ENCODE measurements at regions of chr10 and their contacts with region 1.

Region 1: GRCh38 chr10:102450194-102450938 is 977 bp downstream of the C10orf95 start:
- DNase-seq: peak in 1 of 2 experiments; percentile 84
- H3K4me3 ChIP-seq: peak overlapping the region; percentile 87 to 99 (median 98)
- H3K27ac ChIP-seq: peak overlapping the region; percentile 72
- H3K4me1 ChIP-seq: peaks cover 5 to 26% (median 18%) of the 10 kb centered on the region in 4 experiments
- H3K27me3 ChIP-seq: no peaks in the 10 kb centered on the region
- CTCF ChIP-seq: no peak
- EP300 ChIP-seq: no peak
- POLR2A ChIP-seq: no peak; a peak in 1 of 3 replicates
- RAD21 ChIP-seq: no peak; a peak in 1 of 4 replicates

Region 2: GRCh38 chr10:102399217-102400089 is 50.9 kb before region 1 on chr10:
- CTCF ChIA-PET with region 1: interaction called, 23 read pairs
- POLR2A ChIA-PET with region 1: interaction called, 5 read pairs
- DNase-seq: peak; percentile 70 to 96
- H3K4me3 ChIP-seq: peak overlapping the region; percentile 33 to 70 (median 60)
- H3K27ac ChIP-seq: no peak overlapping the region
- H3K4me1 ChIP-seq: peaks cover 0 to 22% (median 13%) of the 10 kb centered on the region in 4 experiments; a peak in 6 of 7 replicates
- H3K27me3 ChIP-seq: peaks cover 0 to 14% (median 10%) of the 10 kb centered on the region in 4 experiments; a peak in 6 of 7 replicates
- CTCF ChIP-seq: peak in 2 of 3 experiments; percentile 96; a peak in 3 of 4 replicates
- EP300 ChIP-seq: peak in 1 of 2 experiments; percentile 35; a peak in 1 of 3 replicates
- POLR2A ChIP-seq: peak in 1 of 2 experiments; percentile 73; a peak in 2 of 3 replicates
- RAD21 ChIP-seq: peak; percentile 63 to 75

Region 3: DNA sequence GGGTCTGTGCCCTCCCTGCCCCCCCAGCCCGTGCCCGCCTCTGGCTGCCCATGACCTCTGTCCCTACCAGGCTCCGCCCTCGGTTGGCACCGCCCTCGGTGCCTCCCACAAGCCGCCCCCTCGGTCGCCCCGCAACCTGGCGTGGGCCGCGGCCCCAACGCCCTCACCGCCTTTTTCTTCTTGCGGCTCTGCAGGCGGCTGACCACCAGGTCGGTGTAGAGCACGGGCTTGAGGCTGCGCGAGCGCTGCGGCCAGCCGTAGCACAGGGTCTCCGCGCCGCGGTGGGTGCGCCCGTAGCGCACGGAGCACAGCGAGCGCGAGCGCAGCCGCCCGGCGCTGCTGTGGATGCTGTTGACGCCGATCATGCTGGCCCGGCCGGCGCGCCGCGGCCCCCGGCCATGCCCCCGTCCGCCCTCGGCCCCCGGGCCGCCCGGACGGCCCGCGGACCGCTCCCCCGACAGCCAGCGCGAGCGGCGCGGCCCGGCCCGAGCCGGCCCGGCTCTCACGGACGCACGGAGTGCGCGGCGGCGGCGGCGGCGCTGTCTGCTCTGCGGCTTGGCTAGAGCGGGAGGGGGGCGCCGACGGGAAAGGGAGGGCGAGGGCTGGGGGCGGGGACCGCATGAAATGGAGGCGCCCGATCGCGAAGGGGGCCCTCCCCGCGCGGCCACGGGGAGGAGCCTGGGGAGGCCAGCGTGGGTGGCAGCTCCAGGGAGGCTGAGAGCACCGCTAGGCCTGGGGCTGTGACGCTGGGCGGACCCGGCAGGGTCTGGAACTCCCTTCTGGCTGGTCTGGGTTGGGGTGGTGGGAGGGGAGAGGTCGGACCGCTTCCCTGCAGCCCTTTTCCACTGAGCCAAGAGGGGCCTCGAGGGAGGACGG is 41.4 kb before region 1 on chr10:
- CTCF ChIA-PET with region 1: interaction called, 23 read pairs
- POLR2A ChIA-PET with region 1: interaction called, 13 read pairs
- DNase-seq: peak in 1 of 2 experiments; percentile 67
- H3K4me3 ChIP-seq: peak overlapping the region; percentile 55 to 70 (median 57)
- H3K27ac ChIP-seq: no peak overlapping the region
- H3K4me1 ChIP-seq: peaks cover 9 to 31% (median 22%) of the 10 kb centered on the region in 4 experiments
- H3K27me3 ChIP-seq: peaks cover 17 to 52% (median 50%) of the 10 kb centered on the region in 4 experiments
- CTCF ChIP-seq: peak in 1 of 3 experiments; percentile 6; a peak in 1 of 4 replicates
- EP300 ChIP-seq: no peak; a peak in 1 of 3 replicates
- POLR2A ChIP-seq: no peak
- RAD21 ChIP-seq: no peak; a peak in 1 of 4 replicates

Region 4: GRCh38 chr10:102461187-102462054 is 11.1 kb after region 1 on chr10:
- CTCF ChIA-PET with region 1: interaction called, 38 read pairs
- POLR2A ChIA-PET with region 1: interaction called, 69 read pairs
- DNase-seq: peak; percentile 75 to 98
- H3K4me3 ChIP-seq: peak overlapping the region; percentile 50 to 75 (median 67)
- H3K27ac ChIP-seq: peak overlapping the region; percentile 51; the same call in 1 of the 2 replicates
- H3K4me1 ChIP-seq: peaks cover 8 to 24% (median 14%) of the 10 kb centered on the region in 4 experiments
- H3K27me3 ChIP-seq: peaks cover 0 to 5% (median 0%) of the 10 kb centered on the region in 4 experiments; a peak in 1 of 7 replicates
- CTCF ChIP-seq: no peak
- EP300 ChIP-seq: peak in 1 of 2 experiments; percentile 16; a peak in 1 of 3 replicates
- POLR2A ChIP-seq: peak in 1 of 2 experiments; percentile 71; a peak in 2 of 3 replicates
- RAD21 ChIP-seq: no peak